ENCODE measurements at regions of chr13 and their contacts with region 1.

Region 1: DNA sequence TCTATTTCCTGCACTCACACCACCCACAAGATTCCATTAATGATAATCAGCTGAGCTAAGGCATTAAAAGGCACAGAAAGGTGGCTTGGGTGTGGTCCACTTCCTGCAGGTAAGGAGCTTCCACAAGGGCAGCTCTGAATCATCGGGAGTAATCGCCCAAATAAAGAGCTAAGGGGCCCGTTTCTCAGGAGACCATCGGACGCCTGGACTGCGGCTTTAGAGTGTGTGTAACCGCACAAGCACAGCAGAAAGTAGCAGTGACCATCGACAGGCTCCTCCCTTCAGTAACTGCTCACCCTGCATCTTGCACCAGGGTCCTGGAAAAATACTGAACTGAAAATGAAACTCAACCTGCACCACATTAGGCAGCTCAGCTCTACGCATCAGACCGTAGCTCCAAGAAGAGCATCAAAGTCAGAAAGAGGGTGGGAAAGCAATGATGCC is 6.0 kb downstream of the STK24 start:
- DNase-seq: peak; percentile 41 to 49 (median 46)
- H3K4me3 ChIP-seq: peak overlapping the region in 2 of 3 experiments; percentile 21 to 65
- H3K4me3 Mint-ChIP-seq: peak overlapping the region; percentile 71 to 80
- H3K27ac ChIP-seq: peak overlapping the region; percentile 47 to 89
- H3K27ac Mint-ChIP-seq: peak overlapping the region; percentile 41 to 95 (median 84)
- H3K4me1 ChIP-seq: peaks cover 62 to 80% of the 10 kb centered on the region in 2 donors
- H3K4me1 Mint-ChIP-seq: peaks cover 89% of the 10 kb centered on the region
- H3K27me3 ChIP-seq: no peaks in the 10 kb centered on the region
- H3K27me3 Mint-ChIP-seq: peaks cover 0 to 3% (median 0%) of the 10 kb centered on the region in 3 donors
- CTCF ChIP-seq: no peak

Region 2: GRCh38 chr13:98509271-98510155 is 61.4 kb before region 1 on chr13:
- intact Hi-C with region 1: loop called in 1 of 2 experiments (anchors 5 kb)
- DNase-seq: peak; percentile 94 to 97 (median 95)
- H3K4me3 ChIP-seq: peak overlapping the region in 1 of 3 experiments; percentile 44
- H3K4me3 Mint-ChIP-seq: peak overlapping the region; percentile 35 to 61
- H3K27ac ChIP-seq: peak overlapping the region; percentile 89 to 97
- H3K27ac Mint-ChIP-seq: peak overlapping the region; percentile 94 to 99 (median 98)
- H3K4me1 ChIP-seq: peaks cover 37 to 39% of the 10 kb centered on the region in 2 donors
- H3K4me1 Mint-ChIP-seq: peaks cover 50% of the 10 kb centered on the region
- H3K27me3 ChIP-seq: no peaks in the 10 kb centered on the region
- H3K27me3 Mint-ChIP-seq: peaks cover 0 to 3% (median 2%) of the 10 kb centered on the region in 3 donors
- CTCF ChIP-seq: no peak